Left ventricle myocardium inferior (tissue), 1 donor: ENCODE measurements at regions of chr20 and their contacts with region 1.

Region 1: DNA sequence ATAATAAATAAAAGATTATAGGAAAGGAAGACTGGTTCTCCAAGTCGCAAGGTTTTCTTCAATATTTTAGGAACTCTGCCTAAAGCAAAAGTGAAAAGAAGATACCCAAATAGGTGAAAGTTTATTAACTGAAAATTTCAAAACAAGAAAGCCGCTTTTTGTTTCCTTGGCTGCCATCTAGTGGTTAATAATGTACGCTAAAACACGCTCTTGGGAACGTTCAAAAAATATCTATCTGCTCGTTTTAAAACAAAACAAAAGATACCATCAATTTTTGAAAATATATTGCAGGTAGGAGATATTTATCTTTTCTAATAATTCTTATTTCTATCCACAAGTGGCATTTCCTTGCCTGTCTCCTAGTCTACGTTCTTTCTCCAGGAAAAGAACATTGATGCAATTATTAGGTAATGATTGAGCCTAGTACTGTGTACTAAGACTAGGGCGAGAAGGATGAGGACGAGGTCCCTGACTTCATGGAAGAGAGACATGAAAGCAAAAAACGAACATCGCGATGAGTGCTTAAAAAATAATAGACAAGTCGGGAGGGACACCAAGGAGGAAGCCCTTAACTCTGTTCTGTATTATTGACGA is 97.2 kb downstream of the SPTLC3 start:
- DNase-seq: no peak
- H3K4me3 ChIP-seq: peak overlapping the region; percentile 7
- H3K27ac ChIP-seq: no peak overlapping the region
- H3K4me1 ChIP-seq: peaks cover 12% of the 10 kb centered on the region
- H3K27me3 ChIP-seq: no peaks in the 10 kb centered on the region
- CTCF ChIP-seq: peak; percentile 83

Region 2: GRCh38 chr20:12925214-12925755 is 180.7 kb before region 1 on chr20:
- intact Hi-C with region 1: loop called (anchors 2 kb)
- DNase-seq: no peak
- H3K4me3 ChIP-seq: no peak overlapping the region
- H3K27ac ChIP-seq: no peak overlapping the region
- H3K4me1 ChIP-seq: peaks cover 3% of the 10 kb centered on the region
- H3K27me3 ChIP-seq: peaks cover 31% of the 10 kb centered on the region
- CTCF ChIP-seq: peak; percentile 84

Region 3: GRCh38 chr20:12970372-12970821 is 135.6 kb before region 1 on chr20:
- intact Hi-C with region 1: loop called (anchors 2 kb)
- DNase-seq: no peak
- H3K4me3 ChIP-seq: no peak overlapping the region
- H3K27ac ChIP-seq: no peak overlapping the region
- H3K4me1 ChIP-seq: no peaks in the 10 kb centered on the region
- H3K27me3 ChIP-seq: no peaks in the 10 kb centered on the region
- CTCF ChIP-seq: peak; percentile 70

Region 4: GRCh38 chr20:13348311-13349234 is 242.6 kb after region 1 on chr20:
- intact Hi-C with region 1: no loop called
- DNase-seq: no peak
- H3K4me3 ChIP-seq: no peak overlapping the region
- H3K27ac ChIP-seq: no peak overlapping the region
- H3K4me1 ChIP-seq: no peaks in the 10 kb centered on the region
- H3K27me3 ChIP-seq: no peaks in the 10 kb centered on the region
- CTCF ChIP-seq: no peak